Activated B cell treated with CpG ODN at 0.5 μM for 24 hours (primary cell): ENCODE measurements at regions of chr7 and their contacts with region 1.

Region 1: GRCh38 chr7:87152107-87152844 is at the start of gene DMTF1:
- DNase-seq: peak; percentile 81
- ATAC-seq: peak; percentile 85
- H3K4me3 Mint-ChIP-seq: peak within 1 kb of the TSS; percentile 99
- H3K27ac Mint-ChIP-seq: peak within 1 kb of the TSS; percentile 99
- H3K4me1 Mint-ChIP-seq: peaks cover 49% of the 10 kb centered on the region
- H3K27me3 Mint-ChIP-seq: no peaks in the 10 kb centered on the region
- CTCF ChIP-seq: no peak
- total RNA-seq, gene DMTF1: 159 and 175 TPM in 2 replicates

Region 2: DNA sequence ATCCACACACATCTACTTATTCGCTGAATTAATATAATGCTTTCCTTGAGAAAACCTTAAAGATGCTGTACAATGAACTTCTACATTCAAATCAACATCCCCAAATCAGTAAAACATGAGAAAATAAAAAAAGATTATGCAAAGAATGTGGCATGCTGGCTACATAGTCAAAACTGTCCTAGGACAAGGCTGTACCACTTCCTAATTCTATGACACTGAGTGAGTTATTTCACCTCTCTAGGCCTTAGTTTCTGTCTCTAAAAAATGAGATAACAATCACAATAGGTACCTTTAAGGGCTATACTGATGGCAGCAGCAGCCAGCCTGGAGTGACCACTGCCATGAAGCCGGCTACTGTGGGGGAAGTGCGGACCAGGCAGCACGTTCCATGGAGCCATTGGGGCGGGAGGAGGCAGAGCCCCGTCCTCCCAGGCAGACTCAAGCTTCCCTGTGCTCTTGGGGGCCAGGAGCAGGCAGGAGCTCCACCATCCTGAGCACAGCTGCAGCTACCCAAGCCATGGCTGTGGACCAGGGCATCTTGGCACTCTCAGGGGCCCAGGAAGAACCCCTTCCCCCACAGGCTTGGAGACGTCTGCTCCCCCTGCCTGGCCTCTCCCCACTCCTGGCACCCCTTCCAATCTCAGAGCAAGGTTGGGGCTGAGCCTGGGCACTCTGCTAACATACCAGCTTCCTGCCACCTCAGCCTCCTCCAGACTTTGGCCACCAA is 203.1 kb before region 1 on chr7:
- CTCF ChIA-PET with region 1: interaction called, 4 read pairs
- POLR2A ChIA-PET with region 1: interaction called, 10 read pairs
- intact Hi-C with region 1: no loop called
- DNase-seq: peak; percentile 15
- ATAC-seq: peak; percentile 84
- H3K4me3 Mint-ChIP-seq: peak overlapping the region; percentile 48
- H3K27ac Mint-ChIP-seq: peak overlapping the region; percentile 80
- H3K4me1 Mint-ChIP-seq: peaks cover 27% of the 10 kb centered on the region
- H3K27me3 Mint-ChIP-seq: no peaks in the 10 kb centered on the region
- CTCF ChIP-seq: no peak

Region 3: DNA sequence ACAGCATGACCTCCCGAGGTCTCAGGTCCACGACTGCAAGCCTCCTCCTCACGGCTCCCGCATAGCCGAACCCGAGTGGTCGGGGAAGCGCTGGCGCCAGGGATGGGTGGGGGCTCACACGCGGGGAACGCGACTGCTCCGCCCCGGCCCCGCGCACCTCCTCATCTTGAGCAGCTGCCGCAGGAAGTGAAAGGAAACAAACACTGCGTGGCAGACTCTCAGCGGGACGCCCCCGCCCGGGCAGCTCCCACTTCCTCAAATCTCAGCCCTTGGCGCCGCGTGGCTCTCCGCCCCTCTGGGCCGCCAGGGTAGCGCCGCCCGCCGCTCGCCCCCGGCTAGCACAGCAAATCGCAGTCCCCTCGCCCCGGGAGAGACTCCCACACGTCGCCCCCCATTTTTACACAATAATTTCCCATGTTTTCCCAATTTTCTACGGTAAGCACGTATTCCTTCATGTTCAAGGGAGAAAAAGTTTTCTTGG is 67.3 kb after region 1 on chr7 and contains the start of gene TMEM243:
- CTCF ChIA-PET with region 1: interaction called, 6 read pairs
- POLR2A ChIA-PET with region 1: interaction called, 311 read pairs
- intact Hi-C with region 1: loop called (anchors 1 kb)
- DNase-seq: peak; percentile 85
- ATAC-seq: peak; percentile 60
- H3K4me3 Mint-ChIP-seq: peak within 1 kb of the TSS; percentile 98
- H3K27ac Mint-ChIP-seq: peak within 1 kb of the TSS; percentile 99
- H3K4me1 Mint-ChIP-seq: peaks cover 51% of the 10 kb centered on the region
- H3K27me3 Mint-ChIP-seq: no peaks in the 10 kb centered on the region
- CTCF ChIP-seq: no peak
- total RNA-seq, gene TMEM243: 106 and 111 TPM in 2 replicates

Region 4: GRCh38 chr7:87416682-87417587 is 264.7 kb after region 1 on chr7:
- CTCF ChIA-PET with region 1: no interaction called
- POLR2A ChIA-PET with region 1: no interaction called
- intact Hi-C with region 1: loop called (anchors 10 kb)
- DNase-seq: no peak
- ATAC-seq: peak; percentile 56
- H3K4me3 Mint-ChIP-seq: no peak overlapping the region
- H3K27ac Mint-ChIP-seq: no peak overlapping the region
- H3K4me1 Mint-ChIP-seq: peaks cover 20% of the 10 kb centered on the region
- H3K27me3 Mint-ChIP-seq: no peaks in the 10 kb centered on the region
- CTCF ChIP-seq: peak; percentile 68

Region 5: GRCh38 chr7:87628780-87629569 is 476.7 kb after region 1 on chr7:
- CTCF ChIA-PET with region 1: no interaction called
- POLR2A ChIA-PET with region 1: no interaction called
- intact Hi-C with region 1: loop called (anchors 10 kb)
- DNase-seq: peak; percentile 44
- ATAC-seq: peak; percentile 18
- H3K4me3 Mint-ChIP-seq: peak overlapping the region; percentile 83
- H3K27ac Mint-ChIP-seq: no peak overlapping the region
- H3K4me1 Mint-ChIP-seq: peaks cover 11% of the 10 kb centered on the region
- H3K27me3 Mint-ChIP-seq: peaks cover 8% of the 10 kb centered on the region
- CTCF ChIP-seq: no peak

Region 6: GRCh38 chr7:88219781-88220747 is 1067.8 kb after region 1 on chr7 and contains the start of gene SRI:
- CTCF ChIA-PET with region 1: no interaction called
- POLR2A ChIA-PET with region 1: no interaction called
- intact Hi-C with region 1: loop called (anchors 5 kb)
- DNase-seq: peak; percentile 94
- ATAC-seq: peak; percentile 96
- H3K4me3 Mint-ChIP-seq: peak within 1 kb of the TSS; percentile 95
- H3K27ac Mint-ChIP-seq: peak within 1 kb of the TSS; percentile 92
- H3K4me1 Mint-ChIP-seq: peaks cover 25% of the 10 kb centered on the region
- H3K27me3 Mint-ChIP-seq: no peaks in the 10 kb centered on the region
- CTCF ChIP-seq: peak; percentile 73
- total RNA-seq, gene SRI: 97.4 and 101 TPM in 2 replicates